ENCODE measurements at regions of chr20 and their contacts with region 1.

Region 1: DNA sequence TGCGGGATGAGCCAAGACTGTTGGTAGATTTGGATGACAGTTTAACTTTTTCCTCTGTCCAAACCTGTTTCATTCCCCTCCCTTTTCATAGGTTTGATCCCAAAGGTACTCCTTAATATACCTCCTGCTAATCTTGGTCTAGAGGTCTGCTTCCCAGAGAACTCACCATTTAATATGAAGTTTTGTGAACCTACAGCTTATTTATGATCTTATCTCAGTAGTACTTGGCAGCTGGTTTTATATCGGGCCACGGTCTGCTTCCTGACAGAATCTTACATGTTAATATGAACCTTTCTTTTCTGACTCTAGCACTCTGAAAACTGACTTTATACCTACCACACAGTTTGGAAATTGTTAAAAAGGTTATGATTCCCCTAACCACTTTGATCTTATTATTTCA is 138.7 kb downstream of the MACROD2 start:
- DNase-seq: no peak
- ATAC-seq: no peak

Region 2: GRCh38 chr20:13492001-13492481 is 642.0 kb before region 1 on chr20:
- intact Hi-C with region 1: no loop called
- DNase-seq: no peak
- ATAC-seq: peak; percentile 42

Region 3: DNA sequence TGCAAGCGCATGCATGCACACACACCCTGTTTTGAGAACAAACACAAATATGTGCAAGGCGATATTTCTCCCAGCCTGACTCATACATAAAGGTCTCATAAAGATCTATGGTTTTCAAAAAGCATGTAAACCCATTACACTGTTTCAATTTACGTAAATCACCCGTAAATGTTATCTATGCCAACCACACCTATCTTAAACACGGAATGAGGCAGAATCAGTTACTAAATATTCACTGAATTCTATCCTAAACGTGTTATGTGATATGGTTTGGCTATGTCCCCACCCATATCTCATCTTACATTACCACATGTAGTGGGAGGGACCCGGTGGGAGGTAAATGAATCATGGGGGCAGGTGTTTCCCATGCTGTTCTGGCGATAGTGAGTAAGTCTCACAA is 1817.7 kb after region 1 on chr20:
- intact Hi-C with region 1: loop called in 1 of 2 experiments (anchors 10 kb)
- DNase-seq: no peak
- ATAC-seq: no peak